Endothelial cell of umbilical vein (primary cell): ENCODE measurements at regions of chr6 and their contacts with region 1.

Region 1: GRCh38 chr6:5053038-5053437 is 32.1 kb upstream of the PPP1R3G start:
- DNase-seq: peak; percentile 71
- H3K4me3 ChIP-seq: no peak overlapping the region
- H3K27ac ChIP-seq: peak overlapping the region; percentile 45
- H3K4me1 ChIP-seq: peaks cover 27% of the 10 kb centered on the region
- H3K27me3 ChIP-seq: no peaks in the 10 kb centered on the region
- CTCF ChIP-seq: no peak
- POLR2A ChIP-seq: no peak

Region 2: GRCh38 chr6:4812068-4812467 is 241.0 kb before region 1 on chr6:
- CTCF ChIA-PET with region 1: no interaction called
- POLR2A ChIA-PET with region 1: no interaction called
- dilution Hi-C with region 1: no loop called
- intact Hi-C with region 1: loop called (anchors 1 kb)
- DNase-seq: peak; percentile 92
- H3K4me3 ChIP-seq: no peak overlapping the region
- H3K27ac ChIP-seq: peak overlapping the region; percentile 95
- H3K4me1 ChIP-seq: peaks cover 33% of the 10 kb centered on the region
- H3K27me3 ChIP-seq: no peaks in the 10 kb centered on the region
- CTCF ChIP-seq: no peak
- POLR2A ChIP-seq: peak; percentile 46

Region 3: GRCh38 chr6:5030596-5031136 is 22.4 kb before region 1 on chr6:
- CTCF ChIA-PET with region 1: interaction called, 6 read pairs
- POLR2A ChIA-PET with region 1: no interaction called
- dilution Hi-C with region 1: no loop called
- intact Hi-C with region 1: loop called (anchors 2 kb)
- DNase-seq: peak; percentile 83
- H3K4me3 ChIP-seq: no peak overlapping the region
- H3K27ac ChIP-seq: no peak overlapping the region
- H3K4me1 ChIP-seq: peaks cover 7% of the 10 kb centered on the region
- H3K27me3 ChIP-seq: no peaks in the 10 kb centered on the region
- CTCF ChIP-seq: peak; percentile 71 to 74
- POLR2A ChIP-seq: no peak

Region 4: DNA sequence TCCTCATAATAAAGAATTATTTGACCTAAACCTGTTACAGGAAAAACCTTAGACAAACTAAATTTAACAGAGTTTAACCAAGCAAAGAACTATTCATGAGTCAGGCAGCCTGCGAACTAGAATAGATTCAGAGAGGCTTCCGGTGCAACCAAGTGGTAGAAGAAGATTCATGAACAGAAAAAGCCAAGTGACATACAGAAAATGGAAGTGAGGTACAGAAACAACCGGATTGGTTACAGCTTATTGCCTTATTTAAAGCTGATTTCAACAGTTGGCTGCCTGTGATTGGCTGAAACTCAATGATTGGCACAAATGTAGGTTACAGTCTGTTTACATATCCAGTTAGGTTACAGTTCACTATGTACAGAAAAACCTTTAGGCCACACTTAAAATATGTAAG is 42.2 kb after region 1 on chr6:
- CTCF ChIA-PET with region 1: no interaction called
- POLR2A ChIA-PET with region 1: no interaction called
- dilution Hi-C with region 1: no loop called
- intact Hi-C with region 1: no loop called
- DNase-seq: no peak
- H3K4me3 ChIP-seq: no peak overlapping the region
- H3K27ac ChIP-seq: no peak overlapping the region
- H3K4me1 ChIP-seq: no peaks in the 10 kb centered on the region
- H3K27me3 ChIP-seq: peaks cover 7 to 9% of the 10 kb centered on the region in 2 experiments
- CTCF ChIP-seq: no peak
- POLR2A ChIP-seq: no peak

Region 5: GRCh38 chr6:5132731-5133341 is 79.8 kb after region 1 on chr6:
- CTCF ChIA-PET with region 1: interaction called, 6 read pairs
- POLR2A ChIA-PET with region 1: no interaction called
- dilution Hi-C with region 1: no loop called
- intact Hi-C with region 1: loop called (anchors 1 kb)
- DNase-seq: peak; percentile 90
- H3K4me3 ChIP-seq: no peak overlapping the region
- H3K27ac ChIP-seq: peak overlapping the region; percentile 61
- H3K4me1 ChIP-seq: peaks cover 15% of the 10 kb centered on the region
- H3K27me3 ChIP-seq: no peaks in the 10 kb centered on the region
- CTCF ChIP-seq: no peak
- POLR2A ChIP-seq: no peak

Region 6: GRCh38 chr6:5270093-5270680 is 217.1 kb after region 1 on chr6:
- CTCF ChIA-PET with region 1: no interaction called
- POLR2A ChIA-PET with region 1: no interaction called
- dilution Hi-C with region 1: no loop called
- intact Hi-C with region 1: no loop called
- DNase-seq: peak; percentile 62
- H3K4me3 ChIP-seq: no peak overlapping the region
- H3K27ac ChIP-seq: no peak overlapping the region
- H3K4me1 ChIP-seq: no peaks in the 10 kb centered on the region
- H3K27me3 ChIP-seq: no peaks in the 10 kb centered on the region
- CTCF ChIP-seq: no peak
- POLR2A ChIP-seq: no peak

Region 7: GRCh38 chr6:5398530-5398929 is 345.5 kb after region 1 on chr6:
- CTCF ChIA-PET with region 1: interaction called, 6 read pairs
- POLR2A ChIA-PET with region 1: no interaction called
- dilution Hi-C with region 1: no loop called
- intact Hi-C with region 1: loop called (anchors 1 kb)
- DNase-seq: peak; percentile 62
- H3K4me3 ChIP-seq: no peak overlapping the region
- H3K27ac ChIP-seq: no peak overlapping the region
- H3K4me1 ChIP-seq: peaks cover 2% of the 10 kb centered on the region
- H3K27me3 ChIP-seq: no peaks in the 10 kb centered on the region
- CTCF ChIP-seq: peak; percentile 26 to 27
- POLR2A ChIP-seq: no peak